T-cell (primary cell): ENCODE measurements at regions of chr18 and their contacts with region 1.

Region 1: GRCh38 chr18:57775937-57776336 is 27.2 kb downstream of the ATP8B1 start:
- DNase-seq: no peak
- ATAC-seq: no peak
- H3K4me3 ChIP-seq: no peak overlapping the region
- H3K4me3 Mint-ChIP-seq: no peak overlapping the region
- H3K27ac ChIP-seq: no peak overlapping the region
- H3K27ac Mint-ChIP-seq: no peak overlapping the region
- H3K4me1 ChIP-seq: peaks cover 0 to 2% of the 10 kb centered on the region in 2 experiments
- H3K4me1 Mint-ChIP-seq: peaks cover 7 to 16% (median 7%) of the 10 kb centered on the region in 3 donors
- H3K27me3 ChIP-seq: peaks cover 0 to 3% of the 10 kb centered on the region in 2 experiments
- H3K27me3 Mint-ChIP-seq: no peaks in the 10 kb centered on the region

Region 2: GRCh38 chr18:57644540-57644939 is 131.4 kb before region 1 on chr18:
- CTCF ChIA-PET with region 1: no interaction called
- POLR2A ChIA-PET with region 1: interaction called in 1 of 2 experiments, 10 read pairs
- DNase-seq: no peak
- ATAC-seq: no peak
- H3K4me3 ChIP-seq: no peak overlapping the region
- H3K4me3 Mint-ChIP-seq: no peak overlapping the region
- H3K27ac ChIP-seq: no peak overlapping the region
- H3K27ac Mint-ChIP-seq: no peak overlapping the region
- H3K4me1 ChIP-seq: peaks cover 0 to 2% of the 10 kb centered on the region in 2 experiments
- H3K4me1 Mint-ChIP-seq: peaks cover 26 to 29% (median 28%) of the 10 kb centered on the region in 3 donors
- H3K27me3 ChIP-seq: no peaks in the 10 kb centered on the region
- H3K27me3 Mint-ChIP-seq: no peaks in the 10 kb centered on the region

Region 3: GRCh38 chr18:57789090-57789489 is 13.2 kb after region 1 on chr18:
- CTCF ChIA-PET with region 1: no interaction called
- POLR2A ChIA-PET with region 1: no interaction called
- DNase-seq: no peak
- ATAC-seq: no peak
- H3K4me3 ChIP-seq: no peak overlapping the region
- H3K4me3 Mint-ChIP-seq: no peak overlapping the region
- H3K27ac ChIP-seq: no peak overlapping the region
- H3K27ac Mint-ChIP-seq: no peak overlapping the region
- H3K4me1 ChIP-seq: no peaks in the 10 kb centered on the region
- H3K4me1 Mint-ChIP-seq: no peaks in the 10 kb centered on the region
- H3K27me3 ChIP-seq: no peaks in the 10 kb centered on the region
- H3K27me3 Mint-ChIP-seq: peaks cover 6 to 7% of the 10 kb centered on the region in 2 donors

Region 4: GRCh38 chr18:58135701-58136331 is 359.9 kb after region 1 on chr18:
- CTCF ChIA-PET with region 1: no interaction called
- POLR2A ChIA-PET with region 1: no interaction called
- DNase-seq: peak in 26 of 35 experiments; percentile 3 to 67 (median 19)
- ATAC-seq: peak; percentile 50 to 57 (median 54)
- H3K4me3 ChIP-seq: no peak overlapping the region
- H3K4me3 Mint-ChIP-seq: peak overlapping the region in 1 of 3 donors; percentile 11
- H3K27ac ChIP-seq: no peak overlapping the region
- H3K27ac Mint-ChIP-seq: no peak overlapping the region
- H3K4me1 ChIP-seq: peaks cover 0 to 3% of the 10 kb centered on the region in 2 experiments
- H3K4me1 Mint-ChIP-seq: peaks cover 8 to 16% (median 12%) of the 10 kb centered on the region in 3 donors
- H3K27me3 ChIP-seq: peaks cover 0 to 8% of the 10 kb centered on the region in 2 experiments
- H3K27me3 Mint-ChIP-seq: peaks cover 24 to 25% of the 10 kb centered on the region in 2 donors